Endothelial cell of umbilical vein (primary cell): ENCODE measurements at regions of chr6 and their contacts with region 1.

Region 1: GRCh38 chr6:46410334-46410953 is 80.8 kb downstream of the RCAN2 start:
- DNase-seq: peak; percentile 50
- H3K4me3 ChIP-seq: no peak overlapping the region
- H3K27ac ChIP-seq: no peak overlapping the region
- H3K4me1 ChIP-seq: no peaks in the 10 kb centered on the region
- H3K27me3 ChIP-seq: peaks cover 0 to 9% of the 10 kb centered on the region in 2 experiments
- CTCF ChIP-seq: peak; percentile 40 to 43
- POLR2A ChIP-seq: no peak

Region 2: GRCh38 chr6:46099952-46100351 is 310.5 kb before region 1 on chr6:
- CTCF ChIA-PET with region 1: interaction called, 12 read pairs
- POLR2A ChIA-PET with region 1: no interaction called
- dilution Hi-C with region 1: no loop called
- intact Hi-C with region 1: no loop called
- DNase-seq: no peak
- H3K4me3 ChIP-seq: no peak overlapping the region
- H3K27ac ChIP-seq: no peak overlapping the region
- H3K4me1 ChIP-seq: no peaks in the 10 kb centered on the region
- H3K27me3 ChIP-seq: peaks cover 0 to 2% of the 10 kb centered on the region in 2 experiments
- CTCF ChIP-seq: no peak
- POLR2A ChIP-seq: no peak

Region 3: GRCh38 chr6:46203391-46204177 is 206.9 kb before region 1 on chr6:
- CTCF ChIA-PET with region 1: interaction called, 11 read pairs
- POLR2A ChIA-PET with region 1: no interaction called
- dilution Hi-C with region 1: no loop called
- intact Hi-C with region 1: no loop called
- DNase-seq: no peak
- H3K4me3 ChIP-seq: no peak overlapping the region
- H3K27ac ChIP-seq: no peak overlapping the region
- H3K4me1 ChIP-seq: no peaks in the 10 kb centered on the region
- H3K27me3 ChIP-seq: no peaks in the 10 kb centered on the region
- CTCF ChIP-seq: no peak
- POLR2A ChIP-seq: no peak

Region 4: DNA sequence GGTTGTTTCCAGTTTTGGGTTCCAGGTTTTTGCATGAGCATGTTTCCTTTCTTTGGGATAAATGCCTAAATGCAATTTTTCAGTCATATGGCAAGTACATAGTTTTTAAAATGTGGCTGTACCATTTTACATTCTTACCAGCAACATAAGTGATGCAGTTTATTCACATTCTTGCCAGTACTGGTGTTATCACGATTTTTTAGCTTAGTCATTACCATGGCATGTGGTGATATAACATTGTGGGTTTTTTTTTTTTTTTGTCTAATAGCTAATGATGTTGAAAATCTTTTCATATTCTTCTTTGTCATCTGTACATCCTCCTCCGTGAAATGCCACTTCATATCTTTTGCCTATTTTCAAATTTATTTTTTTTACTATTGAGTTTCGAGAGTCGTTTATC is 274.3 kb after region 1 on chr6:
- CTCF ChIA-PET with region 1: no interaction called
- POLR2A ChIA-PET with region 1: no interaction called
- dilution Hi-C with region 1: no loop called
- intact Hi-C with region 1: no loop called
- DNase-seq: no peak
- H3K4me3 ChIP-seq: no peak overlapping the region
- H3K27ac ChIP-seq: no peak overlapping the region
- H3K4me1 ChIP-seq: no peaks in the 10 kb centered on the region
- H3K27me3 ChIP-seq: no peaks in the 10 kb centered on the region
- CTCF ChIP-seq: no peak
- POLR2A ChIP-seq: no peak